IMR-90 (cell line): ENCODE measurements at regions of chr20 and their contacts with region 1.

Region 1: GRCh38 chr20:3374296-3374695 is 33.2 kb downstream of the DNAAF9 start:
- DNase-seq: no peak
- ATAC-seq: no peak
- H3K4me3 ChIP-seq: no peak overlapping the region
- H3K27ac ChIP-seq: no peak overlapping the region
- H3K4me1 ChIP-seq: no peaks in the 10 kb centered on the region
- H3K27me3 ChIP-seq: no peaks in the 10 kb centered on the region
- CTCF ChIP-seq: no peak
- POLR2A ChIP-seq: no peak
- RAD21 ChIP-seq: no peak

Region 2: GRCh38 chr20:3045816-3046676 is 328.2 kb before region 1 on chr20 and contains the start of gene MRPS26:
- CTCF ChIA-PET with region 1: no interaction called
- POLR2A ChIA-PET with region 1: no interaction called
- dilution Hi-C with region 1: no loop called
- in situ Hi-C with region 1: no loop called
- intact Hi-C with region 1: no loop called
- DNase-seq: peak; percentile 81
- ATAC-seq: peak; percentile 94
- H3K4me3 ChIP-seq: peak within 1 kb of the TSS; percentile 83
- H3K27ac ChIP-seq: peak within 1 kb of the TSS; percentile 94
- H3K4me1 ChIP-seq: peaks cover 13% of the 10 kb centered on the region
- H3K27me3 ChIP-seq: no peaks in the 10 kb centered on the region
- CTCF ChIP-seq: no peak
- POLR2A ChIP-seq: no peak; the same call in 1 of the 2 replicates
- RAD21 ChIP-seq: no peak
- total RNA-seq, gene MRPS26: 22.2 and 24.7 TPM in 2 replicates

Region 3: GRCh38 chr20:3282271-3283221 is 91.8 kb before region 1 on chr20:
- CTCF ChIA-PET with region 1: no interaction called
- POLR2A ChIA-PET with region 1: interaction called, 12 read pairs
- dilution Hi-C with region 1: no loop called
- in situ Hi-C with region 1: no loop called
- intact Hi-C with region 1: no loop called
- DNase-seq: no peak
- ATAC-seq: no peak
- H3K4me3 ChIP-seq: no peak overlapping the region
- H3K27ac ChIP-seq: no peak overlapping the region
- H3K4me1 ChIP-seq: no peaks in the 10 kb centered on the region
- H3K27me3 ChIP-seq: no peaks in the 10 kb centered on the region
- CTCF ChIP-seq: no peak
- POLR2A ChIP-seq: no peak
- RAD21 ChIP-seq: no peak